ENCODE measurements at regions of chr1 and their contacts with region 1.

Region 1: DNA sequence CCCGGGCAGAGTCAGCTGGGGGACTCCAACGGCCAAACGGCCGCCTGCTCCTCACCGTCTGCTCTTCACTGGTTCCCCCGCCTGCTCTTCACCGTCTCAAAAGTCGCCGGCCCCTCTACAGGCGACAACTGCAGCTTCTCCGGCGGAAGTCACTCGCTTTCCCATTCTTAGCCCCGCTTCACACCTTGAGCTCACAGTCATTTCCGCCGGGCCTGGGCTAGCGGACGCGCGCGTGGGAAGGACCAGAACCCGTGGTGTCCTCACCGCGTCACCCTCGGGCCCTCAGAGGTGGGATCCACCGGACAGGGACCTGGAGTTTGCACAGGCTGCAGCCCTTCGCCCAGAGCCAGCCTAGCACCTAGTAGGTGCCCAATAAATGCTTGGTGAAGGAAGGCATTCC is 27.9 kb upstream of the HJV start:
- DNase-seq: peak; percentile 31
- H3K4me3 Mint-ChIP-seq: no peak overlapping the region
- H3K27ac Mint-ChIP-seq: no peak overlapping the region
- H3K4me1 Mint-ChIP-seq: peaks cover 32% of the 10 kb centered on the region
- H3K27me3 Mint-ChIP-seq: no peaks in the 10 kb centered on the region

Region 2: GRCh38 chr1:145963995-145964901 is 85.2 kb before region 1 on chr1 and contains the starts of genes ANKRD34A and POLR3GL:
- CTCF ChIA-PET with region 1: no interaction called
- POLR2A ChIA-PET with region 1: interaction called, 15 read pairs
- intact Hi-C with region 1: no loop called
- DNase-seq: peak; percentile 96
- H3K4me3 Mint-ChIP-seq: peak within 1 kb of the TSS; percentile 98
- H3K27ac Mint-ChIP-seq: peak within 1 kb of the TSS; percentile 95
- H3K4me1 Mint-ChIP-seq: peaks cover 31% of the 10 kb centered on the region
- H3K27me3 Mint-ChIP-seq: no peaks in the 10 kb centered on the region
- total RNA-seq, gene ANKRD34A: 4.6 to 4.7 TPM
- total RNA-seq, gene POLR3GL: 27.3 to 30.9 TPM

Region 3: GRCh38 chr1:145990249-145991097 is 59.0 kb before region 1 on chr1:
- CTCF ChIA-PET with region 1: no interaction called
- POLR2A ChIA-PET with region 1: no interaction called
- intact Hi-C with region 1: no loop called
- DNase-seq: no peak
- H3K4me3 Mint-ChIP-seq: no peak overlapping the region
- H3K27ac Mint-ChIP-seq: peak overlapping the region; percentile 6
- H3K4me1 Mint-ChIP-seq: peaks cover 61% of the 10 kb centered on the region
- H3K27me3 Mint-ChIP-seq: no peaks in the 10 kb centered on the region